ENCODE measurements at regions of chr17 and their contacts with region 1.

Region 1: DNA sequence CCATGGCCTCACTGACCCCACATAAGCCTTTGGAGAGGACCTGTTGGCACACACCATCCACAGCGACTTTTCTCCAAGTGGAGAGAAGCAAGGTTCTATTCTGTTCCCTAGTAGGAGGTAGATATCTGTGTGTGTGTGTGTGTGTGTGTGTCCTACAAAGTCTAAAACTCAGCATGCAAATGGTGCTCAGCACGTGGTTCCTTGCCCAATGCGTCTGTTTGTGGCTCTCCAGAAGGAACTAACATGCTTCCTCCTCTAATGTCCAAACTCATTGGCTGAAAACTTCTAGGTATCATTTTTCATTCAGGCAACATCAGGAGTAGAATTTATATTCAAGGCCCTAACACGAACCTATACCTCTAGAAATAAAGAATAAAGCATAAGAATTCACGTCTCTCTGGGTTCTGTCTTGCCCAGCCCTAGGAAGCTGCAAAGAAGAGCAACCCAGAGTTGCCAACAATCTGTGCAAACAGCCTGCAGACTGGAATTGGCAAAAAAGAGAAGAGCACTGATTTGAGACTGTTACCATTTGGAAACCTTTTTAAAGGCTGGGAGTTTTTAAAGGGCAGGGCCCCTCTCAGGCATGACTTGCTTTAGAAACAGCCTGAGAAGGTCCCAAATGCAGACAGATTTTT is 25.5 kb downstream of the MAP3K14 start:
- DNase-seq: no peak
- H3K4me3 ChIP-seq: no peak overlapping the region
- H3K27ac ChIP-seq: peak overlapping the region; percentile 79 to 98 (median 92)
- H3K4me1 ChIP-seq: peaks cover 0 to 100% (median 98%) of the 10 kb centered on the region in 4 donors
- H3K27me3 ChIP-seq: no peaks in the 10 kb centered on the region
- CTCF ChIP-seq: no peak
- EP300 ChIP-seq: no peak
- POLR2A ChIP-seq: no peak

Region 2: GRCh38 chr17:45305532-45306087 is 14.3 kb after region 1 on chr17:
- intact Hi-C with region 1: loop called (anchors 2 kb)
- DNase-seq: no peak
- H3K4me3 ChIP-seq: no peak overlapping the region
- H3K27ac ChIP-seq: peak overlapping the region; percentile 84 to 98 (median 97)
- H3K4me1 ChIP-seq: peaks cover 0 to 98% (median 93%) of the 10 kb centered on the region in 4 donors
- H3K27me3 ChIP-seq: no peaks in the 10 kb centered on the region
- CTCF ChIP-seq: no peak
- EP300 ChIP-seq: no peak
- POLR2A ChIP-seq: no peak

Region 3: DNA sequence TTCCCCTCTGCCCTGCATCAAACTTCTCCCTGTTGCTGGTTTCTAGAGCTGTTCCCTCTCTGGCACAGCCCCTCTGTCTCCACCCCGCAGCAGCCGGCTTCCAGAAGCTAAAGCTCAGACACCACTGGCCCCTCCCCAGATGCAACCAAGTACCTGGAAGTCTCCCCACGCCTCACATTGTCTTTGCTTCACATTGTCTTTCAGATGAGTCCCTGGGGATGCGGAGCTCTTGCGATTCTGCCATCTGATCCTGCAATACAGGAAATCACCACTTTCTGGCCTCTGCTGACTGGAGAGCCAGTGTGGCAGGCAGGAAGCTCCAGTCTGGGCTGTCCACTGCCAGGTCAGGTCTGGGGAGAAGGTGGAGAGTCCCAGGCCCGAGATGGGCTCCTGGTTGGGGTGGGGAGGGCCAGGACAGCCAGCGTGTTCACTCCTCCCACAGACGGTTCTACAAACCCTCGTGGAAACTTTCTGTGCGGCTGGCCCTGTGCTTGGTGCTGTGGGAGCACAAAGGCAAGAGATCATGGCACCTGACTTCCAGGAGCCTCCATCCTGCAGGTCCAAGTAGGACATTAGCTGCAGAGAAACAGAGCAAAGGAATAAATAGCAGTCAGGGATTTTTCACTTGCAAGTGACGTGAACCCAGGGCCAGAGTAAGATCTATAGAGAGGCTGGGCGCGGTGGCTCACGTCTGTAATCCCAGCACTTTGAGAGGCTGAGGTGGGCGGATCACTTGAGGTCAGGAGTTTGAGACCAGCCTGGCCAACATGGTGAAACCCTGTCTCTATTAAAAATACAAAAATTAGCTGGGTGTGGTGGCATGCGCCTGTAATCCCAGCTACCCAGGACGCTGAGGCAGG is 73.5 kb after region 1 on chr17:
- intact Hi-C with region 1: no loop called
- DNase-seq: peak; percentile 56
- H3K4me3 ChIP-seq: no peak overlapping the region
- H3K27ac ChIP-seq: no peak overlapping the region
- H3K4me1 ChIP-seq: no peaks in the 10 kb centered on the region
- H3K27me3 ChIP-seq: no peaks in the 10 kb centered on the region
- CTCF ChIP-seq: no peak
- EP300 ChIP-seq: no peak
- POLR2A ChIP-seq: no peak

Measured in sigmoid colon (tissue), 7 donors.